ENCODE measurements at regions of chr11 and their contacts with region 1.

Region 1: GRCh38 chr11:45964911-45965389 is 42.5 kb downstream of the LARGE2 start:
- DNase-seq: peak; percentile 74
- H3K27ac ChIP-seq: peak overlapping the region; percentile 36; the same call in 1 of the 2 replicates
- CTCF ChIP-seq: peak; percentile 92

Region 2: GRCh38 chr11:45982656-45983470 is 17.9 kb after region 1 on chr11:
- CTCF ChIA-PET with region 1: interaction called, 10 read pairs
- POLR2A ChIA-PET with region 1: no interaction called
- DNase-seq: peak; percentile 75
- H3K27ac ChIP-seq: no peak overlapping the region
- CTCF ChIP-seq: no peak

Region 3: DNA sequence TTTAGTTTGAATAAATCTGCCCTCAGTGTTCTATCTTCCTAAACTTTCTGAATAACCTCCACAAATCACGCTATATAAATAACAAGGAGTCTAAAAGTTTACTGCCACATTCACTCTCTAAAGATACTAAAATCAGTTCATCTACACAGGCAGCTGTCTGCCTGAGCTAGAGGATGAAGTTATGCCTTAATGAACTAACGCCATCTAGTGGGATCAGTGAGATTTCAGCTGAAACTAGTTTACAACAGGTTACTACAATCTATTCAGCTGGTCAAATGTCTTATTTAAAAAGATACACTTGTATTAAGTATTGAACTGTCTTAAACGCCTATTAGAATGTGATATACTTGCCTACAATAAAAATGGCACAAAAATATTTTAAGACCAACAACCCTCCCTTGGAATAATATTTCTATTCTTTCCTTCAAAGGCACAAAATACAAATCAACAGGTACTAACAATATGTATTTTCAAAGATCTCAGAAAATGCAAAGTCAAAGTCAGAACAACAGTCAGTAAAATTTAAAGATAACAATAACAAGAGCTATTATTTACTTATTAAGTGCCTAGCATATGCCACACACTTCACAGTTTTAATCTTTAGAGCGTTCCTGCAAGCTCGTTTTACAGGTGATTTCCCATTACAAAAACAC is 41.6 kb after region 1 on chr11:
- CTCF ChIA-PET with region 1: interaction called, 21 read pairs
- POLR2A ChIA-PET with region 1: no interaction called
- DNase-seq: peak; percentile 66
- H3K27ac ChIP-seq: no peak overlapping the region
- CTCF ChIP-seq: peak; percentile 84